ENCODE measurements at regions of chr10 and their contacts with region 1.

Region 1: GRCh38 chr10:132654702-132655661 is 117.4 kb downstream of the INPP5A start:
- DNase-seq: peak; percentile 58
- H3K4me3 Mint-ChIP-seq: no peak overlapping the region
- H3K27ac Mint-ChIP-seq: no peak overlapping the region
- H3K4me1 Mint-ChIP-seq: no peaks in the 10 kb centered on the region
- H3K27me3 Mint-ChIP-seq: no peaks in the 10 kb centered on the region
- CTCF ChIP-seq: peak; percentile 97

Region 2: GRCh38 chr10:132643709-132644526 is 11.1 kb before region 1 on chr10:
- CTCF ChIA-PET with region 1: interaction called, 18 read pairs
- POLR2A ChIA-PET with region 1: no interaction called
- intact Hi-C with region 1: no loop called
- DNase-seq: no peak
- H3K4me3 Mint-ChIP-seq: no peak overlapping the region
- H3K27ac Mint-ChIP-seq: no peak overlapping the region
- H3K4me1 Mint-ChIP-seq: no peaks in the 10 kb centered on the region
- H3K27me3 Mint-ChIP-seq: no peaks in the 10 kb centered on the region
- CTCF ChIP-seq: no peak

Region 3: DNA sequence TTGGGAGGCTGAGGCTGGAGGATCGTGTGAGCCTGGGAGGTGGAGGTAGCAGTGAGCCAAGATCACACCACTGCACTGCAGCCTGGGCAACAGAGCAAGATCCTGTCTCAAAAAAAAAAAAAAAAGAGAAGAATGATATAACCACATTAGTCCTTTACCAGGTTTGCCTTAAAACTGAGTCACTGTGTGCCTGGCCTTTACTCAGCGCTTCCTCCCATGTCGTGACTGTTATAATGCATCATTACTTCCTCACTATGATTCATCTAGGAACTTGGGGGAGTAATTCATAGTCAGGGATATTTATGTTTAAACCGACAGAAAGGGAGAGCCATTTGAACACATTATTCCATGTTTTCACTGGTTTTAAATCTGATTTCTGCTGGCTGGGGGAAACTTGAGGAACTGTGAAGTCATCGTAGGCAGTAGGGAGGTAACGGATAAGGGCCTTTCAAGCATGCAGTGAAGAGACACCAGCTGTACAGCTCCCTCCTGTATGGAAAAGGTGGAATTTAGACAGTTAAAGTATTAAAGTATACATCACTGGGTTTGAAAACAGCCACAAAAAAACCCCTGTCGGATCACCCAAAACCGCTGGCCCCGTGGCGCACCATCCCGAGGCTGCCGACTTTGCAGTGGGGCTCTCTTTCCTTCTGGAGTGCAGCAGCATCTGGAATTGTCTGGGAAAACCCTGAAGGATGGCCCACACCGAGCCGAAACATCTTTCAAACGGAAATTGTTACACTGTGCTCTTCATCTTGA is 11.1 kb after region 1 on chr10:
- CTCF ChIA-PET with region 1: interaction called, 20 read pairs
- POLR2A ChIA-PET with region 1: interaction called, 4 read pairs
- intact Hi-C with region 1: no loop called
- DNase-seq: peak; percentile 91
- H3K4me3 Mint-ChIP-seq: peak overlapping the region; percentile 69
- H3K27ac Mint-ChIP-seq: peak overlapping the region; percentile 82
- H3K4me1 Mint-ChIP-seq: peaks cover 21% of the 10 kb centered on the region
- H3K27me3 Mint-ChIP-seq: no peaks in the 10 kb centered on the region
- CTCF ChIP-seq: no peak

Region 4: GRCh38 chr10:132726194-132726593 is 71.2 kb after region 1 on chr10:
- CTCF ChIA-PET with region 1: no interaction called
- POLR2A ChIA-PET with region 1: no interaction called
- intact Hi-C with region 1: no loop called
- DNase-seq: no peak
- H3K4me3 Mint-ChIP-seq: no peak overlapping the region
- H3K27ac Mint-ChIP-seq: peak overlapping the region; percentile 27
- H3K4me1 Mint-ChIP-seq: no peaks in the 10 kb centered on the region
- H3K27me3 Mint-ChIP-seq: no peaks in the 10 kb centered on the region
- CTCF ChIP-seq: no peak

Region 5: DNA sequence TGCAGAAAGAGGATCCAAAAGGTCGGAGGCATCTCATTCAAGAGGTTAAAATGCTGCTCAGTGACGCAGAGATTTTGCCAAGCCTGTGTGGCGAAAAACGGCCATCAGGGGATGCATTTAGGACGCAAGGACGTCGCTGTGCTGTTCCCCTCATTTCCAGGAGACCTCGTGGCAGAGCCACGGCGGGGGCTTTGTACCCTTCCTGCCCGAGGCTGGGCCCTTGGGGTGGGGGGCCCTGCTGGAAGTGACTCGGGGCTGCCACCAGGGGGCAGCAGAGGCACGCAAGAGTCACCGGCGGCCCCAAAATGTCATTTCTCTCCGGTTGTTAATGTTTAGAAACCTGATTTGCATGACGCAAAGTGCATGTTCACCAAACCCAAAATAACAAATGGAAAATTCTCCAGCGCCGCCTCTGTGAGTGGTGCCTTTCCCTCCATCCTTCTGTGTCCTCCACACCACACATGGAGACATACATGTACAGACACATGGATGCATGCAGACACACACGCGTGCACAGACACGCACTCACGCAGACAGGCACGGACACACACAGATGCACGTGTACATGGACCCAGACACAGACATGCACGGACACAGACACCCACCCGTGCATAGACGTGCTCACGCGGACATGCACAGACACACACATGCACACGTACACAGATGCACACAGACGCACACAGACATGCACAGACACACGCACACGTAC is 182.0 kb after region 1 on chr10:
- CTCF ChIA-PET with region 1: interaction called, 3 read pairs
- POLR2A ChIA-PET with region 1: no interaction called
- intact Hi-C with region 1: loop called (anchors 2 kb)
- DNase-seq: peak; percentile 10
- H3K4me3 Mint-ChIP-seq: no peak overlapping the region
- H3K27ac Mint-ChIP-seq: no peak overlapping the region
- H3K4me1 Mint-ChIP-seq: no peaks in the 10 kb centered on the region
- H3K27me3 Mint-ChIP-seq: peaks cover 35% of the 10 kb centered on the region
- CTCF ChIP-seq: peak; percentile 95

Region 6: DNA sequence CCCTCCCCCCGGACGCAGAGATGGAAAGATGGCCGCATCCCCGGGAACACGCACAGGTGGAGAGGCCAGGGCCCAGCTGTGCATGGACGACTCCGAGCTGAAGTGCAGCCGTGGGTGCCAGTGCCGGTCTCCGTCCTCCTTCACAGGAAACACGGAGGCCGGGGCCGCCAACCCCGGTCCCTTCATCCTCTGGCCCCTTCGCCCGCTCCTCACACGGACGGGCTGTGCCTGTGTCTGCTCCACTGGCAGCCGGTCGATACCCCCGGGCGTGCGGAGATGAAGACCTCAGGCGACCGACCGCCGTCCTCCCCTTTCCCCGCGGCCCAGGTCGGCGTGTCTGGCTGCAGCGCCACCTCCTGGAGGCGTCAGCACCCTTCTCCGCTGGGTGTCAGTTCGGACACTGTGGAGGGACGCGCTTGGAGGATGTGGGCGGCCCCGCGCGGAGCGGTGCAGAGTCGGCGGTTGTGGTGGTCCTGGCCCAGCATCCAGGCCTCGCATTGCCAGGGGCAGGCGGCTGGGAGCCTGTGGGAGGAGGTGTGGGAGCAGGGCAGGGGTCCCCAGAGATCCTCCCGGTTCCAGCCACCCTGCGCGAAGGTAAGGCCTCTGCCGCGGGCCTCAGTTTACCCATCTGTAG is 663.6 kb after region 1 on chr10:
- CTCF ChIA-PET with region 1: no interaction called
- POLR2A ChIA-PET with region 1: no interaction called
- intact Hi-C with region 1: loop called (anchors 10 kb)
- DNase-seq: peak; percentile 66
- H3K4me3 Mint-ChIP-seq: peak overlapping the region; percentile 37
- H3K27ac Mint-ChIP-seq: no peak overlapping the region
- H3K4me1 Mint-ChIP-seq: peaks cover 12% of the 10 kb centered on the region
- H3K27me3 Mint-ChIP-seq: peaks cover 13% of the 10 kb centered on the region
- CTCF ChIP-seq: peak; percentile 75

Measured in MCF 10A (cell line).